CD8-positive, alpha-beta T cell (primary cell): ENCODE measurements at regions of chr17 and their contacts with region 1.

Region 1: GRCh38 chr17:17641621-17642409 is 39.4 kb upstream of the RAI1 start:
- DNase-seq: peak; percentile 59 to 90 (median 82)
- ATAC-seq: peak; percentile 92
- H3K4me3 ChIP-seq: no peak overlapping the region
- H3K4me3 Mint-ChIP-seq: no peak overlapping the region
- H3K27ac ChIP-seq: no peak overlapping the region
- H3K27ac Mint-ChIP-seq: no peak overlapping the region
- H3K4me1 ChIP-seq: no peaks in the 10 kb centered on the region
- H3K4me1 Mint-ChIP-seq: peaks cover 2% of the 10 kb centered on the region
- H3K27me3 ChIP-seq: no peaks in the 10 kb centered on the region
- H3K27me3 Mint-ChIP-seq: peaks cover 6% of the 10 kb centered on the region
- CTCF ChIP-seq: peak; percentile 75

Region 2: GRCh38 chr17:17125136-17126084 is 516.4 kb before region 1 on chr17:
- CTCF ChIA-PET with region 1: no interaction called
- POLR2A ChIA-PET with region 1: no interaction called
- intact Hi-C with region 1: loop called in 1 of 2 experiments (anchors 10 kb)
- DNase-seq: peak in 6 of 9 experiments; percentile 18 to 75 (median 56)
- ATAC-seq: peak; percentile 73
- H3K4me3 ChIP-seq: peak overlapping the region; percentile 25 to 38
- H3K4me3 Mint-ChIP-seq: peak overlapping the region; percentile 80
- H3K27ac ChIP-seq: peak overlapping the region; percentile 14 to 84
- H3K27ac Mint-ChIP-seq: peak overlapping the region; percentile 87
- H3K4me1 ChIP-seq: peaks cover 56% of the 10 kb centered on the region
- H3K4me1 Mint-ChIP-seq: peaks cover 74% of the 10 kb centered on the region
- H3K27me3 ChIP-seq: no peaks in the 10 kb centered on the region
- H3K27me3 Mint-ChIP-seq: no peaks in the 10 kb centered on the region
- CTCF ChIP-seq: no peak

Region 3: GRCh38 chr17:17391668-17392370 is 250.0 kb before region 1 on chr17:
- CTCF ChIA-PET with region 1: interaction called, 13 read pairs
- POLR2A ChIA-PET with region 1: no interaction called
- intact Hi-C with region 1: no loop called
- DNase-seq: peak; percentile 37 to 87 (median 62)
- ATAC-seq: peak; percentile 82
- H3K4me3 ChIP-seq: peak overlapping the region; percentile 47 to 49
- H3K4me3 Mint-ChIP-seq: peak overlapping the region; percentile 83
- H3K27ac ChIP-seq: peak overlapping the region; percentile 34 to 41
- H3K27ac Mint-ChIP-seq: peak overlapping the region; percentile 88
- H3K4me1 ChIP-seq: peaks cover 24% of the 10 kb centered on the region
- H3K4me1 Mint-ChIP-seq: peaks cover 25% of the 10 kb centered on the region
- H3K27me3 ChIP-seq: no peaks in the 10 kb centered on the region
- H3K27me3 Mint-ChIP-seq: peaks cover 2% of the 10 kb centered on the region
- CTCF ChIP-seq: no peak

Region 4: GRCh38 chr17:17496189-17497064 is 145.4 kb before region 1 on chr17 and contains the start of gene RASD1:
- CTCF ChIA-PET with region 1: interaction called, 57 read pairs
- POLR2A ChIA-PET with region 1: interaction called, 4 read pairs
- intact Hi-C with region 1: loop called (anchors 1 kb)
- DNase-seq: peak; percentile 62 to 88 (median 75)
- ATAC-seq: peak; percentile 85
- H3K4me3 ChIP-seq: peak within 1 kb of the TSS; percentile 51 to 76
- H3K4me3 Mint-ChIP-seq: peak within 1 kb of the TSS; percentile 84
- H3K27ac ChIP-seq: no peak within 1 kb of the TSS
- H3K27ac Mint-ChIP-seq: no peak within 1 kb of the TSS
- H3K4me1 ChIP-seq: peaks cover 13% of the 10 kb centered on the region
- H3K4me1 Mint-ChIP-seq: peaks cover 16% of the 10 kb centered on the region
- H3K27me3 ChIP-seq: peaks cover 0 to 8% of the 10 kb centered on the region in 2 experiments
- H3K27me3 Mint-ChIP-seq: peaks cover 10% of the 10 kb centered on the region
- CTCF ChIP-seq: peak; percentile 95
- total RNA-seq, gene RASD1: 2.8 to 2.9 TPM